Activated CD4-positive, alpha-beta T cell treated with anti-CD3 and anti-CD28 coated beads for 36 hours (primary cell): ENCODE measurements at regions of chr11 and their contacts with region 1.

Region 1: DNA sequence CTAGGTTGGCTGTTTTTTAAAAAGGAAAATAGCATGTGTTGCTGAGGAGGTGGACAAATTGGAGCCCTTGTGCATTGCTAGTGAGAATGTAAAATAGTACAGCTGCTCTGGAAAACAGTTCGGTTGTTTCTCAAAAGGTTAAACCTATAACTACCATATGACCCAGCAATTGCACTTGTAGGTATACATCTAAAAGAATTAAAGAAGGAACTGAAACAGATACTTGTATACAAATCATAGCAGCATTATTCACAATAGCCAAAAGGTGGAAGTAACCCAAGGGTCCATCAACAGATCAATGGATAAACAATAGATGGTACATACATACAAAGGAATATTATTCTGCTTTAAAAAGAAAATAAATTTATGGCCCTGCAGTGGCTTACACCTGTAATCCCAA is 111.4 kb downstream of the CSTPP1 start:
- DNase-seq: no peak
- ATAC-seq: no peak
- H3K4me3 Mint-ChIP-seq: no peak overlapping the region
- H3K27ac Mint-ChIP-seq: no peak overlapping the region
- H3K4me1 Mint-ChIP-seq: no peaks in the 10 kb centered on the region
- H3K27me3 Mint-ChIP-seq: no peaks in the 10 kb centered on the region

Region 2: GRCh38 chr11:47020793-47021526 is 27.0 kb before region 1 on chr11:
- CTCF ChIA-PET with region 1: no interaction called
- POLR2A ChIA-PET with region 1: no interaction called
- intact Hi-C with region 1: no loop called
- DNase-seq: no peak
- ATAC-seq: no peak
- H3K4me3 Mint-ChIP-seq: no peak overlapping the region
- H3K27ac Mint-ChIP-seq: no peak overlapping the region
- H3K4me1 Mint-ChIP-seq: no peaks in the 10 kb centered on the region
- H3K27me3 Mint-ChIP-seq: no peaks in the 10 kb centered on the region

Region 3: GRCh38 chr11:47035108-47035507 is 12.9 kb before region 1 on chr11:
- CTCF ChIA-PET with region 1: interaction called, 3 read pairs
- POLR2A ChIA-PET with region 1: no interaction called
- intact Hi-C with region 1: loop called (anchors 1 kb)
- DNase-seq: no peak
- ATAC-seq: no peak
- H3K4me3 Mint-ChIP-seq: no peak overlapping the region
- H3K27ac Mint-ChIP-seq: no peak overlapping the region
- H3K4me1 Mint-ChIP-seq: no peaks in the 10 kb centered on the region
- H3K27me3 Mint-ChIP-seq: no peaks in the 10 kb centered on the region